Activated T-helper 2 cell treated with anti-CD3 and anti-CD28 coated beads, Interferon-gamma antibody, Interleukin-2, Interleukin-4, amounts not matched to agents 10 μg/mL and 5 μg/mL and 100 μg/mL, durations not matched to agents 14 hours and 24 hours and 36 hours (primary cell): ENCODE measurements at regions of chrX and their contacts with region 1.

Region 1: DNA sequence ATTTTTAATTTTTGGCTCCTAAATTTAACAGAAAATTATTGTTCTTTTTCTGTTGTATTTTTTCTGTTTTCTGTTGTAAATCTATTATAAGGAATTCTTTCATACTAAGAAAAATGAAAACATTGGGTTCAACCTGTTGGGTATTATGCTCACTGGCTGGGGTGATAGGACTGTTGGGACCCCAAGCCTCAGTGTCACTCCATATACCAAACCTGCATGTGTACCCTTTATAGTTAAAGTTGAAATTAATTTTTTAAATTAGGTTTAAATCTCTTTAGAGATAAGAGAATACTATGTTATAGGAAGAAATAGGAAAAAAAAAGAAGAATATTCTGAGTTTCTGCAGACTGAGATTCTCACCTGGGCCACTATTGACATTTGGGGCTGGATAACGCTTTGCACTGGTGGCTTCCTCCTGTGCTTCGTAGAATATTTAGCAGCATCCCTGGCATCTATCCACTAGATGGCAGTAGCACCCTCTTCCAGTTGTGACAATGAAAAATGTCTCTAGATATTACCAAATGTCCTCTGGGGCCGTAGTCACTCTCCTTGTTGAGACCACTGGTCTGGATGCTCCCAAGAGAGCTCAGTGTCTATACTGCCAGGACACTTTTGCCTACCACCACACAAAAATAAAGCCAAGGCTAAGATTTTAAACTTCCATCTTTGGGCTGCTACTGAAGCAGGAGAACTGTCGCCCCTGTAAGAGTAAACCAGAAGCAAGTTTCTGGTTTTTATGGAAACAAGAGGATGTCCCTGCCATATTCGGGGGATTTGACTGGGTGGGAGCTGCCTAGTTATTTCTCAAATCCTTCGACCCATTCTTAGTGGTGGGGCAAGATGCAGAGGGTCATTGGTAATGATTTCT is 22.4 kb upstream of the CLTRN start:
- DNase-seq: peak; percentile 37
- H3K4me3 Mint-ChIP-seq: no peak overlapping the region
- H3K27ac Mint-ChIP-seq: no peak overlapping the region
- H3K4me1 Mint-ChIP-seq: peaks cover 4% of the 10 kb centered on the region
- H3K27me3 Mint-ChIP-seq: no peaks in the 10 kb centered on the region

Region 2: DNA sequence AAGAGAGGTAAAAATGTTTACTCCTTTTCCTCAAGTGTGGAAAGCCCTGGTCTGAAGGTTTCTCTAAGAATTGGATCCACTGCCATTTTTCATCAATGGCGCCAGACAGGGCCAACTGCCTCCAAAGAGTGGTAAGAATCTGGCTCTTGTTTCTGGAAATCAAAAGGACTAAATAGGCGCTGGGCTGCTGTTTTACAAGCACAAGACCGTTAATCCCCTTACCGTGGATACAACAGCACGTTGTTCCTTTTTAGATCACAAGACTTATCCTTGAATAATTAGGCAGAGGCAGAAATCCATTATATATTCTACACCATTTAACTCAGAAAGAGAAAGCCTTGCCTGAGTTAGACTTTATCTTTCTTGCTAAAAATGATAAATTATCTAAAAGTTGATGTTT is 33.1 kb before region 1 on chrX:
- intact Hi-C with region 1: no loop called
- DNase-seq: no peak
- H3K4me3 Mint-ChIP-seq: no peak overlapping the region
- H3K27ac Mint-ChIP-seq: no peak overlapping the region
- H3K4me1 Mint-ChIP-seq: no peaks in the 10 kb centered on the region
- H3K27me3 Mint-ChIP-seq: no peaks in the 10 kb centered on the region

Region 3: DNA sequence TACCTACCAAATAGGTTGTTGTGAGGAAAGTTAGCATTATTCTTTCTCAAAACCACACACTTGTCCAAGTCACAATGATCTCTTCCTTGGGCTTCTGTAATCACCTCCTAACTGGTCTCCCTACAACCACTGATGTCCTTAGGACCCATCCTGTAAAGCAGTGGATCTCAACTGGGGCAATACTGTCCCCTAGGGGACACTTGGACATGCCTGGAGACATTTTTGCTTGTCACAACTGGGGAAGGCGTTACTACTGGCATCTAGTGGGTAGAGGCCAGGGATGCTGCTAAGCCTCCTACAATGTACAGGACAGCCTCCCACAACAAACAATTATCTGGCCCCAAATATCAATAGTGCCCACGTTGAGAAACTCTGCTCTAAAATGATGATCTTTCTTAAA is 286.2 kb after region 1 on chrX:
- intact Hi-C with region 1: loop called (anchors 10 kb)
- DNase-seq: no peak
- H3K4me3 Mint-ChIP-seq: no peak overlapping the region
- H3K27ac Mint-ChIP-seq: no peak overlapping the region
- H3K4me1 Mint-ChIP-seq: peaks cover 3% of the 10 kb centered on the region
- H3K27me3 Mint-ChIP-seq: no peaks in the 10 kb centered on the region